H1 (cell line): ENCODE measurements at regions of chr6 and their contacts with region 1.

Region 1: GRCh38 chr6:159094444-159095252 is 49.9 kb upstream of the TAGAP start:
- DNase-seq: peak in 1 of 2 experiments; percentile 46
- H3K4me3 ChIP-seq: no peak overlapping the region
- H3K27ac ChIP-seq: no peak overlapping the region
- H3K4me1 ChIP-seq: peaks cover 0 to 7% (median under 1%) of the 10 kb centered on the region in 4 experiments; a peak in 1 of 7 replicates
- H3K27me3 ChIP-seq: no peaks in the 10 kb centered on the region
- CTCF ChIP-seq: no peak
- EP300 ChIP-seq: no peak
- POLR2A ChIP-seq: no peak
- RAD21 ChIP-seq: no peak

Region 2: DNA sequence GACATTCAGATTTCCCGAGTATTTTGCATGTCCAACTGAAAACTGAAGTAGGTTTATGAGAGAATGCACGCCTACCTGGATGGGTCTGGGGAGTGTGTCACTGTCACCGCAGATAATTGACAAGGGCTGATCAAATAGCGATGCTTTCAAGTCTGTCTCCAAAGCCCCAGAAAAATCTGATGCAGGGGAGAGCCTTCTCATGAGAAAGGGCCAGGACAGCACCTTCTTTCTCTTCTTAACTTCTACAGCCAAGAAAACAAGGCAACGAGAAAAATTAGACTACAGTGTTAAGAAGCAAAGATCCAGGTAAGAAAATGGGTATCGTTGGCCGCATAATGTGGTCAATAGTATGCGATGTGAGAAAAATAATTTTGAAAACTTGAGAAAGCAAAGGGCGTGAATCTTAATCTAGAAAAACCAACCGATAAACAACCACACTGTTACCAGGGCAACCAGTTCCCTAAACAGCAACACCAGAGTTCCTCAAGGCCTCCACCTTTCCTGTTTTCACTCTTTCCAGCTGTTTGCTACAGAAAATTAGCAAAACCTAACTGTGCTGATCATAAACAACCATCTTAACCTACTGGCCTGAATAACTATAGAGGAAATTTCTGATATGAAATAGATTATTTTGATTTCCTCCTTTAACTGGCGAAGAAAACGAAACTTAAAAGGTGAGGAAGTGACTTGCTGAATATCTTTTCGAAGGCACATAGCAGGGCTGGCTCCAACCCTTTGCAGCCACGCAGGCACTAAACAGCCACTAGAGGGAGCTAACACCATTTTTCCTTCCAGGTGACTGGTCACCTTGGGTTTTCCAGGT is 52.4 kb before region 1 on chr6:
- CTCF ChIA-PET with region 1: interaction called, 37 read pairs
- POLR2A ChIA-PET with region 1: no interaction called
- DNase-seq: peak; percentile 59 to 73
- H3K4me3 ChIP-seq: peak overlapping the region in 1 of 4 experiments; percentile 24; a peak in 1 of 8 replicates
- H3K27ac ChIP-seq: peak overlapping the region; percentile 69
- H3K4me1 ChIP-seq: no peaks in the 10 kb centered on the region; a peak in 1 of 7 replicates
- H3K27me3 ChIP-seq: no peaks in the 10 kb centered on the region
- CTCF ChIP-seq: peak; percentile 88 to 97 (median 92)
- EP300 ChIP-seq: no peak
- POLR2A ChIP-seq: no peak
- RAD21 ChIP-seq: peak; percentile 83 to 87

Region 3: GRCh38 chr6:159080217-159080976 is 14.3 kb before region 1 on chr6:
- CTCF ChIA-PET with region 1: interaction called, 9 read pairs
- POLR2A ChIA-PET with region 1: interaction called, 12 read pairs
- DNase-seq: no peak
- H3K4me3 ChIP-seq: no peak overlapping the region
- H3K27ac ChIP-seq: no peak overlapping the region
- H3K4me1 ChIP-seq: no peaks in the 10 kb centered on the region
- H3K27me3 ChIP-seq: peaks cover 0 to 3% (median 0%) of the 10 kb centered on the region in 4 experiments; a peak in 1 of 7 replicates
- CTCF ChIP-seq: no peak
- EP300 ChIP-seq: no peak
- POLR2A ChIP-seq: no peak
- RAD21 ChIP-seq: no peak

Region 4: DNA sequence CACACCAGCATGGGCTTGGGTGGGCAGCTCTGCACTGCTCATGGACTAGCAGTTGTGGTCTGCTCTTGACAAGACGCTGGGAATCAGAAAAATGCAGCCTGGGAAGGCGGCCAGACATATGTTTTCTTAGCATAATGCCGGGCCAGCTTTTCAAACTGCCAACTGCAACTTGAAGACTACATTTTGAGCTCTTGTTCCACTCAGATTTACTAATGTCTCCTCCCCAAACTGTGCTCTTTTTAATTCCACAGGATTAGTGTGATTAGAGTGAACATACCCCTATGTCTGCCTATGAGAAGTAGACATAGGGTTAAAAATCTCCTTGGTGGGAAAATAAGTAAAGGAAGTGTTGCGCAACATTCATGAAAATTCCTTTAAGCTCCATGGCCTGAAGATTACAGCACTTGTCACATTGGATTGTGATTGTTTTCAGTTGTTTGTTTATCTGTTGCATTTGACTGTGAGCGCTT is 69.3 kb after region 1 on chr6:
- CTCF ChIA-PET with region 1: no interaction called
- POLR2A ChIA-PET with region 1: no interaction called
- DNase-seq: no peak
- H3K4me3 ChIP-seq: no peak overlapping the region
- H3K27ac ChIP-seq: no peak overlapping the region
- H3K4me1 ChIP-seq: peaks cover 0 to 3% (median 0%) of the 10 kb centered on the region in 4 experiments; a peak in 2 of 7 replicates
- H3K27me3 ChIP-seq: peaks cover 12 to 32% (median 25%) of the 10 kb centered on the region in 4 experiments
- CTCF ChIP-seq: no peak
- EP300 ChIP-seq: no peak
- POLR2A ChIP-seq: no peak
- RAD21 ChIP-seq: no peak

Region 5: DNA sequence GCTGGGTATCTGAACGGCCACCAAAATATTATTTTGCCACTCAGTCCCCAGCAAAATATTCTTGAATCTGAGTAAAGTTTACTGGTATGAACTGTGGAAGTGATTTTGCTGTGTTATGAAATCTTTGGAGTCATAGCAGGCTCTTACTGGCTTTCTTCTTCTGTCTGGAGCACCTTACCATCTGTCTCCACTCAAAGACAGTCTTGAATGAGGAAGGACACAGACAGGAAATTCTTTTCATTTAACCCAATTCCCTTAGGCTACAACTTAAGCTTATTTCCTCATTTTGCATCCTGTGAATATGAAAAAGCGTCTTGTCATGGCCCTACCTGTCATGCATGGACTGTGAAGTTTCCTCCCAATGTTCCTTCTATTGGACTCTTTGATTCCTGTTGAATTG is 99.3 kb after region 1 on chr6:
- CTCF ChIA-PET with region 1: no interaction called
- POLR2A ChIA-PET with region 1: no interaction called
- DNase-seq: no peak
- H3K4me3 ChIP-seq: no peak overlapping the region
- H3K27ac ChIP-seq: no peak overlapping the region
- H3K4me1 ChIP-seq: no peaks in the 10 kb centered on the region
- H3K27me3 ChIP-seq: no peaks in the 10 kb centered on the region; a peak in 1 of 7 replicates
- CTCF ChIP-seq: no peak
- EP300 ChIP-seq: no peak
- POLR2A ChIP-seq: no peak
- RAD21 ChIP-seq: no peak